ENCODE measurements at regions of chr17 and their contacts with region 1.

Region 1: DNA sequence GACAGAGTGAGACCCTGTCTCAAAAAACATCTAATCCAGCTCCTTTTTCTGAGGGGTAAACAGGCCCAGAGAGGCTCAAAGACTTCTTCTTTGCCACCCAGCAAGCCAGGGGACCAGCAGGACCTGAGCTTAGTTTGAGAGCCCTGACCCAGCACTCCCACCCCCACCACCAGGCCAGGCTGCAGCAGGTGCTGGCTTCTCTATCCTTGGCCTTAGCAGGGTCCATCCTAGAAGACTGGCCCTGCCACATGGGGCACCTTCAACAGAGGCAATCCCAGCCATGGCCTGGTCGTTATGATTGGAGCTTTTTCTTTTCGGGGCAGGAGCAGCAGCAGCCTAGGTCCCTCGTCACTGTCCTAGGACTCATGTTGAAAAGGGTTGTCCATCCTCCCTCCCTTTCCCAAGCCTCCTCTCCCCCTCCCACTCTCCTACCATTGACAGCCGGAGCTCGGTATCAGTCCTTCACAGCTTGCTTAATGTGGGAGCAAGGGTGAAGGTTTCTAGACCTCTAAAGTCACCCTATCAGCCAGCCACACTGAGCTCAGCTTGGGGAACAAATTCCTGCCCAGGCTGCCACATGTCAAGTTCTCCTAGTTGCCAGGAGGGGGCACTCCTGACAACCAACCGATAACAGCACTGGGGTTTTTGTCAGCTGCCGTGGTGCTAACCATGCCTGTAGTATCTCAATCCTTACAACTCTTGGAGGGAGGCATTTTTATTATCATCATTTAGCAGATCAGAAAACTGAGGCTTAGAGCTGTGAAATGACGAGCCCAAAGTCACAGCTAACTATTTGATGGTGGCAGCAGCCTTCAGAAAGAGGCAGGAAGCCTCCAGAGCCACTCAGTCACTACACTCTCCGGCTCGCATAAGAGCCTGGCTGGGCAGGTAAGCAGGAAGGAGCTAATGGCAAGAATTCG is 11.2 kb downstream of the MRPL27 start:
- DNase-seq: peak; percentile 72
- H3K4me3 Mint-ChIP-seq: no peak overlapping the region
- H3K27ac Mint-ChIP-seq: peak overlapping the region; percentile 55
- H3K4me1 Mint-ChIP-seq: peaks cover 7% of the 10 kb centered on the region
- H3K27me3 Mint-ChIP-seq: no peaks in the 10 kb centered on the region

Region 2: GRCh38 chr17:50348522-50349242 is 13.1 kb before region 1 on chr17:
- CTCF ChIA-PET with region 1: interaction called, 20 read pairs
- DNase-seq: no peak
- H3K4me3 Mint-ChIP-seq: peak overlapping the region; percentile 31
- H3K27ac Mint-ChIP-seq: peak overlapping the region; percentile 42
- H3K4me1 Mint-ChIP-seq: peaks cover 36% of the 10 kb centered on the region
- H3K27me3 Mint-ChIP-seq: peaks cover 14% of the 10 kb centered on the region

Region 3: GRCh38 chr17:50372758-50373556 is 11.1 kb after region 1 on chr17 and contains the starts of genes EME1 and MRPL27:
- CTCF ChIA-PET with region 1: interaction called, 27 read pairs
- DNase-seq: peak; percentile 91
- H3K4me3 Mint-ChIP-seq: peak within 1 kb of the TSS; percentile 90
- H3K27ac Mint-ChIP-seq: peak within 1 kb of the TSS; percentile 95
- H3K4me1 Mint-ChIP-seq: peaks cover 39% of the 10 kb centered on the region
- H3K27me3 Mint-ChIP-seq: no peaks in the 10 kb centered on the region

Region 4: DNA sequence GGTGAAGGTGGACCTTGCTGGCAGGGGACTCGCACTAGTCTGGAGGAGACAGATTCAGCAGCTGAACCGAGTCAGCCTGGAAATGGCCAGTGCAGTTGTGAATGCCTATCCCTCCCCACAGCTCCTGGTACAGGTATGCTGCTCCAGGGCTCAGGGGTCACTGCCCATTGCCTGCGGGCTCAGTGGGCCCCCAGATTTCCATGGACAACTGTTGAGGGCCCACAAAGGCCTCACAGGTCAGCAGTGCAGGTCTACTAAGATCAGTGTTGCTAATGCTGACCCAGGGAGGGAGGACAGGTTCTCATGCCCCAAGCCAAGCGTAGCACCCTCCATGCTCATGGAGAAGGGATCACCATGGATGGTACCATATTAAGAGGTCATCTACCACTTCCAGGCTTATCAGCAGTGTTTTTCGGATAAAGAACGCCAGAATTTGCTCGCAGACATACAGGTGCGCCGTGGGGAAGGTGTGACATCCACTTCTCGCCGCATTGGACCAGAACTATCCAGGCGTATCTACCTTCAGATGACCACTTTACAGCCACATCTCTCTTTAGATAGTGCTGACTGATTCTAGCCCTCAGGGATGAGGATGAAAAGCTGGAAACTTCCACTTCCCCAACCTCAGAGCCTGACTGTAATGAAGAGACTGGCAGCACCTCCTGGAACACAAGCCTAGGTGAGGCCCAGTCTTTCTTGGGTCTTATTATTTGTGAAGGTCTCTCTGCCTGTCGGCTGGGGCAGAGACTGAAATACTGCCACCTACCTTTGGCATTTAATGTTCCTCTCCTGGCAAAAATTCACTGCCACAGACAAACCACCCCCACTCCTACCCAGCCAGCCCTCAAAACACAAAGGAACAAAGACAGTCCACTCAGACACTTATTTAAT is 18.8 kb after region 1 on chr17:
- CTCF ChIA-PET with region 1: interaction called, 13 read pairs
- DNase-seq: no peak
- H3K4me3 Mint-ChIP-seq: no peak overlapping the region
- H3K27ac Mint-ChIP-seq: peak overlapping the region; percentile 11
- H3K4me1 Mint-ChIP-seq: no peaks in the 10 kb centered on the region
- H3K27me3 Mint-ChIP-seq: no peaks in the 10 kb centered on the region